Activated CD4-positive, alpha-beta T cell treated with anti-CD3 and anti-CD28 coated beads for 36 hours (primary cell): ENCODE measurements at regions of chr1 and their contacts with region 1.

Region 1: GRCh38 chr1:20932437-20932977 is 145.4 kb upstream of the HP1BP3 start:
- DNase-seq: peak; percentile 65
- ATAC-seq: peak; percentile 84
- H3K4me3 Mint-ChIP-seq: peak overlapping the region; percentile 13
- H3K27ac Mint-ChIP-seq: peak overlapping the region; percentile 91
- H3K4me1 Mint-ChIP-seq: peaks cover 37% of the 10 kb centered on the region
- H3K27me3 Mint-ChIP-seq: no peaks in the 10 kb centered on the region

Region 2: GRCh38 chr1:20696397-20697329 is 235.8 kb before region 1 on chr1:
- CTCF ChIA-PET with region 1: no interaction called
- POLR2A ChIA-PET with region 1: no interaction called
- intact Hi-C with region 1: loop called in 1 of 2 experiments (anchors 1 kb)
- DNase-seq: peak; percentile 89
- ATAC-seq: peak; percentile 98
- H3K4me3 Mint-ChIP-seq: peak overlapping the region; percentile 78
- H3K27ac Mint-ChIP-seq: peak overlapping the region; percentile 65
- H3K4me1 Mint-ChIP-seq: peaks cover 2% of the 10 kb centered on the region
- H3K27me3 Mint-ChIP-seq: no peaks in the 10 kb centered on the region

Region 3: DNA sequence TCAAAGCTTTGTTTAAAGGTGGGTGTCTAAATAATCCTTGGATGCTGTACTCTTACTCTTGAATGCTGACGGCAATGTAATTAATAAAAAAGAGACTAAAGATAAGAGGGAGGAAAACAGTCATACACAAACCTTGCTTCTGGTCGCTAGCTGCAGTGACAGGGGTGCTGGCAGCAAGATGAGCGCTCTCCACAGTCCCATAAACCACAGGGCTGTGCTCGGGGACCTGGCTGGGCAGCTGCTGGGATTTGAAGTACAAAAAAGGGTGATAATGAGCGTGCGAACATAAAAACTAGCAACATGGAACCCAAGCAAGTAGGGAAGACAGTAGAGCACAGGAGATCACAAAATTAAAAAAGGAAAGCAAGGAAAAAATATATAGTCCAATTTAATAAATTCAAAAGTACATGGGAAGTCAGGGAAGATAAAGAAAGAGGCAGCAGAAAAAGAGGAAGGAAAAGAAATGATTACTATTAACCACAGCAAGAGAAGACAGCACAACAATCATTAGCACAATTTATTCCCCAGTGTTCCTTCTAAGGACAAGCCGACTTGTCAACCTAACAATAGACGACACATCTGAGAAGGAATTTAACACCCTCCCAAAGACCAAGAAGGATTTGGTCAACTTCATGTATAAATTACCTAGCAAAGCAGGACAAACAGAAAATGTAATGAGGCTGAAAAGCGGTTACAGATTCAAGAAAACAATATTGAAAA is 17.5 kb after region 1 on chr1:
- CTCF ChIA-PET with region 1: interaction called, 3 read pairs
- POLR2A ChIA-PET with region 1: no interaction called
- intact Hi-C with region 1: loop called in 1 of 2 experiments (anchors 2 kb)
- DNase-seq: no peak
- ATAC-seq: no peak
- H3K4me3 Mint-ChIP-seq: no peak overlapping the region
- H3K27ac Mint-ChIP-seq: no peak overlapping the region
- H3K4me1 Mint-ChIP-seq: peaks cover 2% of the 10 kb centered on the region
- H3K27me3 Mint-ChIP-seq: no peaks in the 10 kb centered on the region

Region 4: GRCh38 chr1:20992322-20993056 is 60.0 kb after region 1 on chr1:
- CTCF ChIA-PET with region 1: no interaction called
- POLR2A ChIA-PET with region 1: no interaction called
- intact Hi-C with region 1: loop called (anchors 1 kb)
- DNase-seq: no peak
- ATAC-seq: peak; percentile 86
- H3K4me3 Mint-ChIP-seq: no peak overlapping the region
- H3K27ac Mint-ChIP-seq: peak overlapping the region; percentile 84
- H3K4me1 Mint-ChIP-seq: peaks cover 22% of the 10 kb centered on the region
- H3K27me3 Mint-ChIP-seq: no peaks in the 10 kb centered on the region